ENCODE measurements at regions of chr22 and their contacts with region 1.

Region 1: DNA sequence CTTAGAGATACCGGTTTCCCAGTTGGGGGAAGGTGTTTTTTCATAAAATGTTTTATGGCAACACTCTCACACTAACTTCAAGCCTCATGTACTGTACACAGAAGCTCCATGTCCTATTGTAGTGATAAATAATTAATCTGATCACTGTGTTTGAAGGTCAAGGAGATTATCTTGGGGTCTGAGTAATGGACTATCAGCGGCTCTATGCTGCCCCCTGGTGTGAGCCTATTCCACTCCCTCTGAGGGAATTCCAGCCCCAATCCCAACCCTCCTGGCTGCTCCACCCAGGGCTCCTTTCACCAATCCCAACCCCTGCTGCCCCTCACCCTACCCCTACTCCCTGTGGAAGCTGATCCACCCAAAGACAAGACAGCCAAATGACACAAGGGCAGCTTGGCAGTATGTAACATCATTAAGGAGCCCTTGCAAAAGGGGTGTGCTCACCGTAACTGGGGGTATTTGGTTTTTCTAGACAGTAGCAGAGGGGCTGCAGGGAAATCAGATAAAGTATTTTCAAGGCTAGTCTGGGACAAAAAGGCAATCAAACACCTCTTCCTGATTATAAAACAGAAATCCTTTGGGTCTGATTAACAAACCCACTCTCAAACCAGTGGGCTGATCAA is 22.3 kb downstream of the HPS4 start:
- DNase-seq: peak; percentile 79
- H3K4me3 Mint-ChIP-seq: no peak overlapping the region
- H3K27ac Mint-ChIP-seq: no peak overlapping the region
- H3K4me1 Mint-ChIP-seq: peaks cover 2% of the 10 kb centered on the region
- H3K27me3 Mint-ChIP-seq: no peaks in the 10 kb centered on the region

Region 2: GRCh38 chr22:26295563-26296126 is 165.7 kb before region 1 on chr22:
- intact Hi-C with region 1: no loop called
- DNase-seq: no peak
- H3K4me3 Mint-ChIP-seq: no peak overlapping the region
- H3K27ac Mint-ChIP-seq: no peak overlapping the region
- H3K4me1 Mint-ChIP-seq: peaks cover 12% of the 10 kb centered on the region
- H3K27me3 Mint-ChIP-seq: peaks cover 8% of the 10 kb centered on the region

Region 3: DNA sequence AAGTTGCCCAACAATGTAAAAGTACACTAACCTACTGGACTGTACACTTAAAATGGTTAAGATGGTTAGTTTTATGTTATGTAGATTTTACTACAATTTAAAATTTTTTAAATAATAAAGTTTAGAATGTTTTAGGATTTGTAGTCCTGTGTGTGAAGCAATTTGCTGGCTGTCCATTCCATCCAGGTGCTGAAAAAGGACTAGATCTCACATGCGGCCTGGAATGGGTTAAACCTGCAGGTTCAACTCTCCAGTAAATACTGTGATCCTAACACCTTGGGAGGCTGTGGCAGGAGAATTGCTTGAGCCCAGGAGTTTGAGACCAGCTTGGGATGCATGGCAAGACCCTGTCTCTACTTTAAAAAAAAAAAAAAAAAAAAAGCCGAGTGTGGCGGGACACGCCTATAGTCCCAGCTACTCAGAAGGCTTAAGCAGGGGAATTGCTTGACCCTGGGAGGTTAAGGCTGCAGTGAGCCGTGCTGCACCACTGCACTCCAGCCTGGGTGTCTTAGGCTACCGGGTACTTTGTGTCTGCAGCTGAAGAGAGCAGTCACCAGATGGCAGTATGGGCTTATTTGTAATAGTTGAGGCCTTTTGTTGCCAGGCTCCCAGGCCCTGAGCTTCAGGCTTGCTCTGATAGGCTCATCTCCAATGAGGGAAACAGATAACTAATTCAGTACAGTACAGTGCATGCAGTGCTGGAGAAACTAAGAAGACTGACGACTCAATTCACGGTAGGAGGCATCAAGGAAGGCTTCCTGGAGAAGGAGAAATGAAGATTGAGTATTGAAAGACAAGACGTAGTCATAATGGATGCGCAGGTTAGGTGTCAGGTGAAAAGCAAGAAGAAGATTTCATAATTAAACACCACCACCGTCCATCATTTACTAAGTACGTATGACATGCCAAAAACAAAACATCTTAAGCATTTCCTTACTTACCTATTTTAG is 97.0 kb before region 1 on chr22:
- intact Hi-C with region 1: loop called (anchors 1 kb)
- DNase-seq: peak; percentile 87
- H3K4me3 Mint-ChIP-seq: no peak overlapping the region
- H3K27ac Mint-ChIP-seq: no peak overlapping the region
- H3K4me1 Mint-ChIP-seq: peaks cover 7% of the 10 kb centered on the region
- H3K27me3 Mint-ChIP-seq: peaks cover 19% of the 10 kb centered on the region

Region 4: DNA sequence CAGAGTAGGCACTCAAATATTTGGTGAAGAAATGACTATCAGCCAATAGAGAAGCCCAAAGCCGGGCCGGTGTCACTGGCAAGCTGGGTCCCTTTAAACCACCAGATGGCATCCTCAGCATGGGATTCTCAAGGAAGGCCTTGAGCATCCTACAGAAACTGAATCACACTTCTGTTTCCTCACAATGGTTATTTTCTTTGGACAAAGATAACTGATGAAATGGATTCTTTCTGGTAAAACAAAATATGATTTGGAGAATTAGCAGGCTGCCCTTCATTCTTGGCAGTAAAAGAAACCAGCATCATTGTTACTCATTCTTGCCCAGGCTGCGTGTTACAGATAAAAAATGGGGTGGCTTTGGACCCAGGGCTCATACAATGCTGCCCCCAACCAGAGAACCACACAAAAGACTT is 62.6 kb before region 1 on chr22:
- intact Hi-C with region 1: loop called (anchors 1 kb)
- DNase-seq: peak; percentile 86
- H3K4me3 Mint-ChIP-seq: no peak overlapping the region
- H3K27ac Mint-ChIP-seq: no peak overlapping the region
- H3K4me1 Mint-ChIP-seq: peaks cover 4% of the 10 kb centered on the region
- H3K27me3 Mint-ChIP-seq: peaks cover 3% of the 10 kb centered on the region